Activated CD4-positive, alpha-beta memory T cell treated with anti-CD3 and anti-CD28 coated beads for 36 hours (primary cell): ENCODE measurements at regions of chr2 and their contacts with region 1.

Region 1: DNA sequence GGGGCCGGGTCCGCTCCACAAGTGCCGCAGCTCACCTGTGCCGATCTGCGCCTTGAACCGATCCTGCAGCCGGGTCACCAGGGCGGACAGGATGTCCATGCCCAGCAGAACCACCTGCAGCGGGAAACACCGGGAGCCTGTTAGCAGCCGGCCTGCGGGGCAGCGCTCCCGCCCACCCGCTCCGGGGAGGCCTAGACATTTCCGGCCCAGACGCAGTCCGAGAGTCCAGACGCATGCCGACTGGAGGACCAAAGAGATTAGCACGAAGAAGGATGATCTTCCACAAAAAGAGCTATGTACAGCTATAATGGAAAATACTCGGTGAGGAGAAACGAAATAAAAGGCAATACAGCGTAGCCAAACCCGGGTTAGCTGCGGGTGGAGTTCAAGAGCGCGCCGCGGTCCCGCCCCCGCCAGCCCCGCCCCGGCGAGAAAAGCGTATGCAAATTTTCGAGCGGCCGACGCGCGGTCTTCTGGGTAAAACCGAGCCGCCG is 421 bp upstream of the RNU4ATAC start:
- DNase-seq: peak; percentile 88
- H3K4me3 Mint-ChIP-seq: peak overlapping the region; percentile 84
- H3K27ac Mint-ChIP-seq: peak overlapping the region; percentile 92
- H3K4me1 Mint-ChIP-seq: peaks cover 69% of the 10 kb centered on the region
- H3K27me3 Mint-ChIP-seq: peaks cover 4% of the 10 kb centered on the region

Region 2: GRCh38 chr2:121400201-121400600 is 130.1 kb before region 1 on chr2:
- CTCF ChIA-PET with region 1: interaction called, 4 read pairs
- POLR2A ChIA-PET with region 1: no interaction called
- intact Hi-C with region 1: loop called (anchors 5 kb)
- DNase-seq: no peak
- H3K4me3 Mint-ChIP-seq: no peak overlapping the region
- H3K27ac Mint-ChIP-seq: no peak overlapping the region
- H3K4me1 Mint-ChIP-seq: no peaks in the 10 kb centered on the region
- H3K27me3 Mint-ChIP-seq: no peaks in the 10 kb centered on the region

Region 3: GRCh38 chr2:121596221-121597080 is 66.2 kb after region 1 on chr2:
- CTCF ChIA-PET with region 1: no interaction called
- POLR2A ChIA-PET with region 1: interaction called, 5 read pairs
- intact Hi-C with region 1: loop called (anchors 2 kb)
- DNase-seq: peak; percentile 22
- H3K4me3 Mint-ChIP-seq: peak overlapping the region; percentile 48
- H3K27ac Mint-ChIP-seq: peak overlapping the region; percentile 70
- H3K4me1 Mint-ChIP-seq: peaks cover 43% of the 10 kb centered on the region
- H3K27me3 Mint-ChIP-seq: no peaks in the 10 kb centered on the region

Region 4: DNA sequence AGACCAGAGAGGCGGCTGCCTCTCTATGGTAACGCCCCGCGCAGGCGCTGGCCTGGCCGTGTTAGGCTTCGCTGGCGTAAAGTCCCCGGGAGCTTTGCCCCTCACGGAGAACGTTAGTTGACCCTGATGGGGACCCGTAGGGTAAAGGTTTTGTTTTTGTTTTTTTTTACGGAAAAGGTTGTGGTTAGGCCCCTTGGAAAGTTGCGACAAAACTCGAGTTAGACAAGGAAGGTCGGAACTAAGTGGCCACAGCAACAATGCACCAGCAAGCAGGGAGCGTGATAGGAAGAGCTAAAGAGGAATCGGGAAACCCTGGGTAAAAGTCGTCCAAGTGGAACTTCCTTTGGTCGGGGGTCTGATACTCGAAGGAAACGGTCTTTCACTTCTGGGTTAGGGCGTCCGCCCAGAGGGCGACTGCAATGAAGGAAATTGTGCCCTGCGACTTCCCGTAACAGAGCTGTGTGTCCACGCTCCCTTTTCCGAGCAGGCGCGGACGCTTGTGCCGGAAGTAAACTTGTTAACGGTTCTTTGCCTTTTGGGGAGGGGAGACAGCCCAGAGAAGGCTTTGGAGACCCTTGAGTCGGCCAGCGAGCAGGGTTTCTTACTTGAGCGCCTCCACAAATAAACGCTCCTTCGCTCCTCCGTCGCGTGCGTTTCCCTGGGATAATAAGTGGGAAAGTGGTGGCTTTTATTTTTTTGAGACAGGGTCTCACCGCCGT is 119.5 kb after region 1 on chr2:
- CTCF ChIA-PET with region 1: interaction called, 12 read pairs
- POLR2A ChIA-PET with region 1: interaction called, 171 read pairs
- intact Hi-C with region 1: loop called (anchors 1 kb)
- DNase-seq: peak; percentile 98
- H3K4me3 Mint-ChIP-seq: peak overlapping the region; percentile 97
- H3K27ac Mint-ChIP-seq: peak overlapping the region; percentile 99
- H3K4me1 Mint-ChIP-seq: peaks cover 58% of the 10 kb centered on the region
- H3K27me3 Mint-ChIP-seq: no peaks in the 10 kb centered on the region

Region 5: GRCh38 chr2:121699421-121700333 is 169.4 kb after region 1 on chr2:
- CTCF ChIA-PET with region 1: interaction called, 6 read pairs
- POLR2A ChIA-PET with region 1: interaction called, 92 read pairs
- intact Hi-C with region 1: loop called (anchors 1 kb)
- DNase-seq: peak; percentile 96
- H3K4me3 Mint-ChIP-seq: peak overlapping the region; percentile 74
- H3K27ac Mint-ChIP-seq: peak overlapping the region; percentile 95
- H3K4me1 Mint-ChIP-seq: peaks cover 45% of the 10 kb centered on the region
- H3K27me3 Mint-ChIP-seq: no peaks in the 10 kb centered on the region

Region 6: GRCh38 chr2:121736462-121737341 is 206.4 kb after region 1 on chr2 and contains the start of gene NIFK:
- CTCF ChIA-PET with region 1: interaction called, 6 read pairs
- POLR2A ChIA-PET with region 1: interaction called, 56 read pairs
- intact Hi-C with region 1: loop called (anchors 1 kb)
- DNase-seq: peak; percentile 100
- H3K4me3 Mint-ChIP-seq: peak within 1 kb of the TSS; percentile 98
- H3K27ac Mint-ChIP-seq: peak within 1 kb of the TSS; percentile 89
- H3K4me1 Mint-ChIP-seq: peaks cover 32% of the 10 kb centered on the region
- H3K27me3 Mint-ChIP-seq: no peaks in the 10 kb centered on the region
- total RNA-seq, gene NIFK: 244 to 252 TPM

Region 7: DNA sequence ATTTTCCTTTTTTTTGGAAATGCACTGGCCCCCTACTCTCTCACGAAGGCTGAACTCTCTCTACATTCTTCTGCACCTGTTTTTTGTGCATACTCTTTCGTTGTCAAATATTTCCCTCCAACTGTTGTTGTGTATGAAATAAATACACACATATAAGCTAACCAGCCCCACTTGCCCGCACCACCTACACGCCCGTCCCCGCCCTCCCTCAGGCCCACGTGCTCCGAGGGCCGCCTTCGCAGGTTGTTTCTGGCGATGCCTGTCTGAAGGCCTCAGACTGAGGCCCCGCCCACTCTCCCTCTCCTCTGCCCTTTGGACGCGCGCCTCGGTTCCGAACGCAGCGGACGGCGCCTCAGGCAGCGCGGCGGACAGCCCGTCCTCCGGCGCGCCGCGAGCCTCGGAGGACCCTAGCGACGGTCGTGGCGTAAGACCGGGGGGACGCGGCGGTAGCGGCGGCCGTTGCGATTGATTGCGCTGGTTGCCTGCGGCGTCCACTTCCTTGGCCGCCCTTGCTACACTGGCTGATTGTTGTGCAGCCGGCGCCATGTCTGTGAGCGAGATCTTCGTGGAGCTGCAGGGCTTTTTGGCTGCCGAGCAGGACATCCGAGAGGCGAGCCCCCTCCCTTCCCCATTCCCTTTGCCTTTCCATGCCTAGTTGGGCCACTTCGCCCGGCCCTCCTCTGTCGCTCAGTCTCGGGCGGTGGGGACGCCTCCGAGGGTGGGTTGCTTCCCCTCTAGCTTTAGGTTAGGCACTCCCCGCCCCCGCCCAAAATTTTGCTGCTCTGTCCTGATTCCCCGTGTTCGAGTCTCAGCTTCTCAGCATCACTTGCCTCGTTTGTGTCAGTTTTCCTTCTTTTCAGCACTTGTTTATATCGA is 225.2 kb after region 1 on chr2 and contains the start of gene TSN:
- CTCF ChIA-PET with region 1: no interaction called
- POLR2A ChIA-PET with region 1: no interaction called
- intact Hi-C with region 1: loop called (anchors 1 kb)
- DNase-seq: peak; percentile 98
- H3K4me3 Mint-ChIP-seq: peak within 1 kb of the TSS; percentile 97
- H3K27ac Mint-ChIP-seq: peak within 1 kb of the TSS; percentile 80
- H3K4me1 Mint-ChIP-seq: peaks cover 27% of the 10 kb centered on the region
- H3K27me3 Mint-ChIP-seq: no peaks in the 10 kb centered on the region
- total RNA-seq, gene TSN: 68.8 to 74.5 TPM